Activated CD4-positive, alpha-beta T cell treated with anti-CD3 and anti-CD28 coated beads for 36 hours (primary cell): ENCODE measurements at regions of chr4 and their contacts with region 1.

Region 1: DNA sequence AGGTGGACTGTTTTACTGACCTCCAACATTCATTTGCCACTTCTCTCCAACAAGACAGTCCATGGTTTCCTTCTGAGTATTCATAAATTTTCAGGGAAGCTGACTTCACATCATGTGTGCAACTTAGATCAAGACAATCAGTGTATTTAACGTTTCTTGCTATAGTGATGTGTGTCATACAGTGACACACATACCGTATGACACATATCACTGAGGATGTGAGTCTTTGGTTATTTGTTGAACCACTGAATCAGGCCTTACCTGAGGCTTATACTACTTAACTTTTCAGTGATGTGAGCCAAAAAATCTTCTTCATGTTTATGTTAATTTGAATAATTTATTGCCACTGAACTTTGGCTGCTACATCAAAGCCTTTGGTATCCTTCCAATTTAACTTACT is 166.8 kb downstream of the BMPR1B start:
- DNase-seq: no peak
- ATAC-seq: no peak
- H3K4me3 Mint-ChIP-seq: no peak overlapping the region
- H3K27ac Mint-ChIP-seq: no peak overlapping the region
- H3K4me1 Mint-ChIP-seq: no peaks in the 10 kb centered on the region
- H3K27me3 Mint-ChIP-seq: no peaks in the 10 kb centered on the region

Region 2: GRCh38 chr4:94934864-94935263 is 10.3 kb after region 1 on chr4:
- CTCF ChIA-PET with region 1: no interaction called
- POLR2A ChIA-PET with region 1: no interaction called
- intact Hi-C with region 1: loop called in 1 of 2 experiments (anchors 1 kb)
- DNase-seq: no peak
- ATAC-seq: no peak
- H3K4me3 Mint-ChIP-seq: no peak overlapping the region
- H3K27ac Mint-ChIP-seq: no peak overlapping the region
- H3K4me1 Mint-ChIP-seq: no peaks in the 10 kb centered on the region
- H3K27me3 Mint-ChIP-seq: no peaks in the 10 kb centered on the region

Region 3: GRCh38 chr4:94957030-94957429 is 32.5 kb after region 1 on chr4:
- CTCF ChIA-PET with region 1: no interaction called
- POLR2A ChIA-PET with region 1: no interaction called
- intact Hi-C with region 1: no loop called
- DNase-seq: no peak
- ATAC-seq: no peak
- H3K4me3 Mint-ChIP-seq: no peak overlapping the region
- H3K27ac Mint-ChIP-seq: no peak overlapping the region
- H3K4me1 Mint-ChIP-seq: no peaks in the 10 kb centered on the region
- H3K27me3 Mint-ChIP-seq: no peaks in the 10 kb centered on the region